ENCODE measurements at regions of chrX and their contacts with region 1.

Region 1: DNA sequence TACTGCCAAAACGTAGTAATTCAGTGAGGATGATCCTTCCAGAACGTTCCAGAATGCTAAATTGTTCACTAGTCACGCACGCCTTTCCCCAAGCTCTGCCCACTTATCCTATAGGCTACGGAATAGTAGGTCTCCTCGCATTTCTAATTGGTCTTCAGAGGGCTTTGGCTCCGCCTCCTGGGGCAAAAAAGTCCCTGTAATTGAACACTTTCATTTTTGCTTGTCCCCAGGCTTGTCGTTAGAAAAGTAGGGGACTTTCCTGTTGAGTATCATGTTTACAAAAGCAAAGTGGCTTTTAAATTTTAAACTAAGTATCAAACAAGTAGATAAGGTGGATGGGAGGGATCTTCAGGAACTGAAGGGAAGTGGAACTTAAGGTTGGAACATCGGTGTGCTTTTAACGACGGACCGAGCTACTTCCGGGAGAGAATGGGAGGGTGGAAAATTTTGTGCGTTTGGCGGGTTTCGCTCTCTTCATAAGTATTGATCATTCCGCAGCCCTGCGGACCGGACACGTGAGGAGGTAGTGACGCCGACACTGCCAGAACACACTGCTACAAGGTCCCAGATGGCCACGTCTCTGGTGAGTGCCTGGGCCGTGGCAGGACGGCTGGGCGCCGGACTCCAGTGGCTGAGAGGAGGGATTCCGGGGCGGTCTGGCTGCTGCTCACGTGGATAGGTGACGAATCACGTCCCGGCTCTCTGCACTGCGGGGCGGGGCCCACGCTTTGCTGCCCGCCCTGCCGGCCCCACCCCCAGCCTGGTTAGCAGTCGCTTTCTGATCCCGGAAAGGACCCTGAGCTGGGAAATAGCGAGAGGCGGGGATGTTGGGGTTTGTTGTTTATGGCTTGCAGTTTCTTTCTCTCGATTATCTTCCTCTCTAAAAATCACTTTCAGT is at the start of gene NXT2:
- DNase-seq: peak; percentile 69
- ATAC-seq: peak; percentile 98
- H3K4me3 Mint-ChIP-seq: peak within 1 kb of the TSS; percentile 94
- H3K27ac Mint-ChIP-seq: peak within 1 kb of the TSS; percentile 98
- H3K4me1 Mint-ChIP-seq: peaks cover 33% of the 10 kb centered on the region
- H3K27me3 Mint-ChIP-seq: no peaks in the 10 kb centered on the region
- CTCF ChIP-seq: no peak
- total RNA-seq, gene NXT2: 9.7 and 12.8 TPM in 2 replicates

Region 2: DNA sequence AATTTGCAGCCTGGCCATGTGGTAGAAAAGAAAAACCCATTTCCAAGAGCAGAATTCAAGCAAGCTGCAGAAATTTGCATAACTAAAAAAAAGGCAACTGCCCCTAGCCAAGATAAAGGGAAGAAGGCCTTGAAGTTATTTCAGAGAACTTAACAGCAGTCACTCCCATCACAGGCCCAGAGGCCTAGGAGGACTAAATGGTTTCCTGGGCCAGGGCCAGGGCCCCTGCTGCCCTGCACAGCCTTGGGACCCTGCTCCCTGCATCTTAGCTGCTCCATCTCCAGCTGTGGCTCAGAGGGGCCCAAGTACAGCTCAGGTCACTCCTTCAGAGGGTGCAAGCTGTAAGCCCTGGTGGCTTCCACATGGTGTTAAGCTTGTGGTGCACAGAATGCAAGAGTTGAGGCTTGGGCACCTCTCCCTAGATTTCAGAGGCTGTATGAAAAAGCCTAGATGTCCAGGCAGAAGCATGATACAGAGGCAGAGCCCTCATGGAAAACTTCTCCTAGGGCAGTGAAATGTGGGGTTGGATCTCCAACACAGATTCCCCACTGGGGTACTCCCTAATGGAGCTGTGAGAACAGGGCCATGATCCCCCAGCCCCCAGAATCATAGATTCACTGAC is 1717.7 kb before region 1 on chrX:
- CTCF ChIA-PET with region 1: no interaction called
- POLR2A ChIA-PET with region 1: no interaction called
- intact Hi-C with region 1: no loop called
- DNase-seq: no peak
- ATAC-seq: no peak
- H3K4me3 Mint-ChIP-seq: no peak overlapping the region
- H3K27ac Mint-ChIP-seq: no peak overlapping the region
- H3K4me1 Mint-ChIP-seq: no peaks in the 10 kb centered on the region
- H3K27me3 Mint-ChIP-seq: peaks cover 6% of the 10 kb centered on the region
- CTCF ChIP-seq: no peak

Region 3: GRCh38 chrX:109403927-109404326 is 132.8 kb before region 1 on chrX:
- CTCF ChIA-PET with region 1: no interaction called
- POLR2A ChIA-PET with region 1: no interaction called
- intact Hi-C with region 1: no loop called
- DNase-seq: no peak
- ATAC-seq: no peak
- H3K4me3 Mint-ChIP-seq: no peak overlapping the region
- H3K27ac Mint-ChIP-seq: no peak overlapping the region
- H3K4me1 Mint-ChIP-seq: no peaks in the 10 kb centered on the region
- H3K27me3 Mint-ChIP-seq: peaks cover 2% of the 10 kb centered on the region
- CTCF ChIP-seq: no peak

Region 4: GRCh38 chrX:109635176-109635575 is 98.5 kb after region 1 on chrX:
- CTCF ChIA-PET with region 1: no interaction called
- POLR2A ChIA-PET with region 1: no interaction called
- intact Hi-C with region 1: loop called (anchors 10 kb)
- DNase-seq: no peak
- ATAC-seq: no peak
- H3K4me3 Mint-ChIP-seq: no peak overlapping the region
- H3K27ac Mint-ChIP-seq: no peak overlapping the region
- H3K4me1 Mint-ChIP-seq: no peaks in the 10 kb centered on the region
- H3K27me3 Mint-ChIP-seq: no peaks in the 10 kb centered on the region
- CTCF ChIP-seq: no peak

Region 5: GRCh38 chrX:109732780-109733657 is 196.3 kb after region 1 on chrX and contains the start of gene ACSL4:
- CTCF ChIA-PET with region 1: no interaction called
- POLR2A ChIA-PET with region 1: interaction called, 4 read pairs
- intact Hi-C with region 1: loop called (anchors 1 kb)
- DNase-seq: peak; percentile 82
- ATAC-seq: peak; percentile 92
- H3K4me3 Mint-ChIP-seq: peak within 1 kb of the TSS; percentile 99
- H3K27ac Mint-ChIP-seq: peak within 1 kb of the TSS; percentile 96
- H3K4me1 Mint-ChIP-seq: peaks cover 43% of the 10 kb centered on the region
- H3K27me3 Mint-ChIP-seq: no peaks in the 10 kb centered on the region
- CTCF ChIP-seq: no peak
- total RNA-seq, gene ACSL4: 36.7 and 55.2 TPM in 2 replicates

Region 6: DNA sequence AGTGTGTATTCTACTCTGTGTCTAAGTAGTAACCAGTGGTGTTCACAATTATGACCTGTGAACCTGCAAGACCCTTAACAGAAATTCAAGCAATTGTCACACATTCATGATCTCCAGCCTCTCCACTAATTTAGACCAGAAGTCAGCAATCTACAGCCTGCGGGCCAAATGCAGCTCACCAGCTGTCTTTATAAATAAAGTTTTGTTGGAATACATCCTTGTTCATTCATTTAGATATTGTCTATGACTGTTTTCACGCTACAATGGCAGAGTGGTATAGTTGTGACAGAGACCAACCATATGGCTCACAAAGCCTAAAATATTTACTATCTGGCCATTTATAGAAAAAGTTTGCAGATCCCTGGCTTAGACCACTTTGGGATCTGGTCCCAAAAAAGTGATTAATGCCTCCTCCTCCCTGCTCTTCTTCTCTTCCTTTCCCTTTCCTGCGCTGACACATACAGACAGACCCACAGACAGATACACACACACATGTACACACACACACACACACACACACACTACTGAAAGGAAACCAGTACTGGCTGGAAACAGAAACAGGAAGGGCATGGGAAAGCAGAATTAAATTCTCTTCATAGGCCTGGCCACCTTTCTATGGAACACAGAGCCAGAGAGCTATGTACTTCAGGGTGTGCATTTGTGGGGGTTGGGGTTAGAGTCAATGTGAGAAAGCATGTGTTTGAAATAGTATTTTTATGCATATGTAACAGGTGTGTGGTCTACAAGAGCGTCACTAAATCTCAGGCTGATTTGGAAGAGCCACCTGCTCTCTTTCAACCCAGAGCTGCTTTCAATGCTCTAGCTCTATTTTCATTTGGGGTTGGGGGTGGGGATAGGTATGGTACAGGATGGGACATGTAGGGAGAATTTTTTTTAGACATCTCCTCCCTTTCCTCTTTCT is 416.6 kb after region 1 on chrX:
- CTCF ChIA-PET with region 1: no interaction called
- POLR2A ChIA-PET with region 1: no interaction called
- intact Hi-C with region 1: no loop called
- DNase-seq: no peak
- ATAC-seq: no peak
- H3K4me3 Mint-ChIP-seq: no peak overlapping the region
- H3K27ac Mint-ChIP-seq: no peak overlapping the region
- H3K4me1 Mint-ChIP-seq: no peaks in the 10 kb centered on the region
- H3K27me3 Mint-ChIP-seq: no peaks in the 10 kb centered on the region
- CTCF ChIP-seq: no peak

Region 7: GRCh38 chrX:110002300-110003166 is 465.8 kb after region 1 on chrX and contains the start of gene TMEM164:
- CTCF ChIA-PET with region 1: no interaction called
- POLR2A ChIA-PET with region 1: interaction called, 6 read pairs
- intact Hi-C with region 1: loop called (anchors 1 kb)
- DNase-seq: peak; percentile 71
- ATAC-seq: peak; percentile 74
- H3K4me3 Mint-ChIP-seq: peak within 1 kb of the TSS; percentile 87
- H3K27ac Mint-ChIP-seq: peak within 1 kb of the TSS; percentile 92
- H3K4me1 Mint-ChIP-seq: peaks cover 38% of the 10 kb centered on the region
- H3K27me3 Mint-ChIP-seq: no peaks in the 10 kb centered on the region
- CTCF ChIP-seq: no peak
- total RNA-seq, gene TMEM164: 20.4 and 21.8 TPM in 2 replicates

Region 8: DNA sequence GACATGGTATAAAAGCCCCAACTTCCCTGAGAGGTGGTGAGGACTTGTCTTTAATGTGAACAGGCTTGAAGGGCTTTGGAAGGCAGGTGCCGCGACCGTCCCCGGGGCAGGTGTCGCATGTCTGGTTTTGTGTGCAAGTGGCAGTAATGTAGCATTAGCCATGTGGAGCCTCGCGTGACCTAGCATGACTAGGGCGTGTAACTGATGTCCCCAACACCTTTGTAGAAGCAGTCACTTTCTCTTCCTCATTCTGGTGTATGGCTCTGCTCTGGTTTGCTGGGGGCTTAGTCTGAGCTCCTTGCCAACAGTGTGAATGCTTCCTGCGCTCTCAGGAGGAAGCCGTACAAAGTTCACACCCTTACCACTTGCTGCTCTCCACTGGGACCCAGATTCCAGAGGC is 635.5 kb after region 1 on chrX:
- CTCF ChIA-PET with region 1: no interaction called
- POLR2A ChIA-PET with region 1: no interaction called
- intact Hi-C with region 1: loop called (anchors 1 kb)
- DNase-seq: peak; percentile 35
- ATAC-seq: peak; percentile 99
- H3K4me3 Mint-ChIP-seq: no peak overlapping the region
- H3K27ac Mint-ChIP-seq: peak overlapping the region; percentile 82
- H3K4me1 Mint-ChIP-seq: peaks cover 27% of the 10 kb centered on the region
- H3K27me3 Mint-ChIP-seq: no peaks in the 10 kb centered on the region
- CTCF ChIP-seq: no peak